Activated naive CD4-positive, alpha-beta T cell treated with anti-CD3 and anti-CD28 coated beads for 36 hours (primary cell): ENCODE measurements at regions of chr1 and their contacts with region 1.

Region 1: GRCh38 chr1:54091666-54092065 is 38.3 kb downstream of the TCEANC2 start:
- DNase-seq: no peak
- H3K4me3 Mint-ChIP-seq: no peak overlapping the region
- H3K27ac Mint-ChIP-seq: no peak overlapping the region
- H3K4me1 Mint-ChIP-seq: no peaks in the 10 kb centered on the region
- H3K27me3 Mint-ChIP-seq: no peaks in the 10 kb centered on the region

Region 2: DNA sequence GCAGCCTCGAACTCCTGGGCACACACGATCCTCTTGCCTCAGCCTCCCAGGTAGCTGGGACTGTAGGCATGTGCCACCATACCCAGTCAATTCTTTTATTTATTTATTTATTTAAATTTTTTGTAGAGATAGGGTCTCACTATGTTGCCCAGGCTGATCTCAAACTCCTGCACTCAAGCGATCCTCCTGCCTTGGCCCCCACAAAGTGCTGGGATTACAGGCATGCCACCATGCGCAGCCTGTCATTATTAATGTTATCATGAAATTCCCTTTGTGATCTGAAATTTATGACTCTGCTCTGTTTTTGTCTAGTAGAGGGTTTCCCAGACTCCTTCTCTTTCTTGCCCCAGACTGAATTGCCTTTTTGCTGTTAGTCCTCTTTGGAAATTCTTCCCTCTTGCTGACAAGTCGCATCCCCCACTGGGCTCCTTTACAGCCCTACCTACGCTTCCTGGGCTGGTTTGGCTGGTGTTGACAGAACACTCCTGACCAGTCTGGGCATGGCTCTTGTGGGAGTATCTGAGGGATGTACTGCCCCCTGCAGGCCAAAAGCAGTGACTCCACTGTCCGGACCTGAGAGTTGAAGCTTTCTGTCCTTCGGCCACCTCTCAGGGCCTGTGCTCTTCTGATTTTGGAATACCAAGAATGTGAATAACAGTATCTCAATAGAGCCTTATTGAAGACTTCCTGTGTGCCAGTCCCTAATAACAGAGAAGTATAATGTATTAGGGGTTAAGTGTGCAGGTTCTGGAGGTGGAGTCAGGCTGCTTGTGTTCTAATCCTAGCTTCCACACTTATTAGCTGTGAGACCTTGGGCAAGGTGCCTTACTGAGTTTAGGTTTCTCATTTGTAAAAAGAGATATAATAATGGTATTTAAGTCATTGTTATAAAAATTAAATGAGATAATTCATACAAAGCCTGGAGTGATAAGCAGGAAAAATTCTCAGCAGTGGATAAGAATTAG is 10.1 kb before region 1 on chr1:
- CTCF ChIA-PET with region 1: interaction called, 20 read pairs
- intact Hi-C with region 1: no loop called
- DNase-seq: peak; percentile 77
- H3K4me3 Mint-ChIP-seq: no peak overlapping the region
- H3K27ac Mint-ChIP-seq: no peak overlapping the region
- H3K4me1 Mint-ChIP-seq: peaks cover 5% of the 10 kb centered on the region
- H3K27me3 Mint-ChIP-seq: no peaks in the 10 kb centered on the region